Tibial artery (tissue), 4 donors: ENCODE measurements at regions of chr5 and their contacts with region 1.

Region 1: DNA sequence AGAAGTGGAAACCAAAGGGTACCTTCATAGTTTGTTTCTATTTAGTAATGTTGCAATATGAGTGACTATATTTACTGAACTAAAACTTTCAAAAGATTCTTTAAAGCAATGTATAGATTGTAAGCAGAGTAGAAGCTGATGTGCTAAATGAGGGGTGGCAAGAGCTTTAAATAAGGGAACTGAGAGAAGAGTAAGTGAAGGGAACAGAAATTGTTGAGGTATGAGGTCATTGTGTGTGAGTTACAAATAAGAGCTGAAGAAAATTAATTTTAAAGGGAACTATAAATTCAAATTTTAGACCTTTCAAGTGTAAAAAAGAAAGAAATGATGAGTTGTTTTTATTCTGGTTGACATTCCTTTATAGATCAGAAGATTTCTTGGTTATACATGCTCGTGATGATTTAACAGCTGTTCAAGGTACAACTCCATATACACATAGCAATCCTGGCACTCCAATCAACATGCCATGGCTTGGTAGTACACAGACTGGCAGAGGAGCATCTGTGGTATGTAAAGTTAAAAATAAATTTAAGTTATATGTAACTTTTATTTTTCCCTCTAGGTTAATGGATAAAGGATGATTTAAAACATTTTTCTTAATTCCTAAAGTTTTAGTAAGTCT is 135.1 kb upstream of the TNFAIP8 start:
- DNase-seq: no peak
- H3K4me3 ChIP-seq: no peak overlapping the region
- H3K27ac ChIP-seq: no peak overlapping the region
- H3K4me1 ChIP-seq: no peaks in the 10 kb centered on the region
- H3K27me3 ChIP-seq: no peaks in the 10 kb centered on the region
- CTCF ChIP-seq: no peak

Region 2: GRCh38 chr5:118520771-118521415 is 699.8 kb before region 1 on chr5:
- intact Hi-C with region 1: no loop called
- DNase-seq: no peak
- H3K4me3 ChIP-seq: no peak overlapping the region
- H3K27ac ChIP-seq: no peak overlapping the region
- H3K4me1 ChIP-seq: peaks cover 0 to 5% (median 0%) of the 10 kb centered on the region in 4 donors
- H3K27me3 ChIP-seq: no peaks in the 10 kb centered on the region
- CTCF ChIP-seq: no peak

Region 3: GRCh38 chr5:119171686-119172085 is 49.0 kb before region 1 on chr5:
- intact Hi-C with region 1: loop called (anchors 2 kb)
- DNase-seq: no peak
- H3K4me3 ChIP-seq: no peak overlapping the region
- H3K27ac ChIP-seq: no peak overlapping the region
- H3K4me1 ChIP-seq: no peaks in the 10 kb centered on the region
- H3K27me3 ChIP-seq: no peaks in the 10 kb centered on the region
- CTCF ChIP-seq: no peak